Natural killer cell (primary cell): ENCODE measurements at regions of chr4 and their contacts with region 1.

Region 1: GRCh38 chr4:94325835-94326234 is 16.8 kb downstream of the HPGDS start:
- DNase-seq: no peak
- ATAC-seq: no peak
- H3K4me3 ChIP-seq: no peak overlapping the region
- H3K4me3 Mint-ChIP-seq: no peak overlapping the region
- H3K27ac ChIP-seq: no peak overlapping the region
- H3K27ac Mint-ChIP-seq: no peak overlapping the region
- H3K4me1 ChIP-seq: no peaks in the 10 kb centered on the region
- H3K4me1 Mint-ChIP-seq: no peaks in the 10 kb centered on the region
- H3K27me3 ChIP-seq: no peaks in the 10 kb centered on the region
- H3K27me3 Mint-ChIP-seq: peaks cover 0 to 3% of the 10 kb centered on the region in 2 donors
- CTCF ChIP-seq: no peak

Region 2: GRCh38 chr4:94304365-94304971 is 21.4 kb before region 1 on chr4:
- intact Hi-C with region 1: loop called (anchors 1 kb)
- DNase-seq: peak in 1 of 2 donors; percentile 50
- ATAC-seq: peak in 1 of 3 donors; percentile 25
- H3K4me3 ChIP-seq: no peak overlapping the region
- H3K4me3 Mint-ChIP-seq: no peak overlapping the region
- H3K27ac ChIP-seq: no peak overlapping the region
- H3K27ac Mint-ChIP-seq: no peak overlapping the region
- H3K4me1 ChIP-seq: no peaks in the 10 kb centered on the region
- H3K4me1 Mint-ChIP-seq: no peaks in the 10 kb centered on the region
- H3K27me3 ChIP-seq: no peaks in the 10 kb centered on the region
- H3K27me3 Mint-ChIP-seq: no peaks in the 10 kb centered on the region
- CTCF ChIP-seq: no peak

Region 3: DNA sequence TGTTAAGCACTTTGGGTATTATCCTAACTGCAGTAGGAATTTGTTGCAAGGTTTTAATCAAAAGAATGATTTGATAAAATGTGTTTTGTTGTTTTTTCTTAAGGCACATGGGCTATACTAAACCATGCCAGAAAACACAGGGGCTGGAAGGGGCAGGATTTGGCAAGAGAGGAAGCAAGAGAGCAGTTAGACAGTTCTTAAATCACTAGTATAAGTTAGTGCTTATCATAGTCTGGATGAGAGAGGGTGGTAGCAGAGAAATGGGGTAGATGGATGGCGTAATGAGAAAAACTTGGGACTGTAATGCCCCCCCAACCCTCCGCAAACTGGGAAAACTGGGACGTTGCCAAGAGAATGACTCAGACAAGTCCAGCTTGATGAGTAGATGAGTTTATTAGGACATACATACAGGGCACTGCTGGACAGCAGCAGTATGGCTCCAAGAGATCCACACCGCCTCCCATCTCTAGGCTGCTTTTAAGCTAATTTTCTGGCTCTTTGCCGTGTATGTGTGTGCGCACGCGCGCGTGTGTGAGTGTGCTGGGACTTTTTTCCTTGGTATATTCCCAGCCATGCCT is 277.4 kb after region 1 on chr4:
- intact Hi-C with region 1: no loop called
- DNase-seq: no peak
- ATAC-seq: no peak
- H3K4me3 ChIP-seq: no peak overlapping the region
- H3K4me3 Mint-ChIP-seq: no peak overlapping the region
- H3K27ac ChIP-seq: no peak overlapping the region
- H3K27ac Mint-ChIP-seq: no peak overlapping the region
- H3K4me1 ChIP-seq: no peaks in the 10 kb centered on the region
- H3K4me1 Mint-ChIP-seq: no peaks in the 10 kb centered on the region
- H3K27me3 ChIP-seq: no peaks in the 10 kb centered on the region
- H3K27me3 Mint-ChIP-seq: no peaks in the 10 kb centered on the region
- CTCF ChIP-seq: no peak